ENCODE measurements at regions of chr3 and their contacts with region 1.

Region 1: GRCh38 chr3:126259411-126260391 is 79.3 kb upstream of the ALDH1L1 start:
- DNase-seq: peak; percentile 69 to 82 (median 79)
- H3K4me3 ChIP-seq: no peak overlapping the region
- H3K27ac ChIP-seq: peak overlapping the region in 1 of 2 donors; percentile 43
- H3K4me1 ChIP-seq: peaks cover 2% of the 10 kb centered on the region
- H3K27me3 ChIP-seq: no peaks in the 10 kb centered on the region
- CTCF ChIP-seq: peak; percentile 58 to 89 (median 74)
- EP300 ChIP-seq: no peak
- POLR2A ChIP-seq: no peak

Region 2: DNA sequence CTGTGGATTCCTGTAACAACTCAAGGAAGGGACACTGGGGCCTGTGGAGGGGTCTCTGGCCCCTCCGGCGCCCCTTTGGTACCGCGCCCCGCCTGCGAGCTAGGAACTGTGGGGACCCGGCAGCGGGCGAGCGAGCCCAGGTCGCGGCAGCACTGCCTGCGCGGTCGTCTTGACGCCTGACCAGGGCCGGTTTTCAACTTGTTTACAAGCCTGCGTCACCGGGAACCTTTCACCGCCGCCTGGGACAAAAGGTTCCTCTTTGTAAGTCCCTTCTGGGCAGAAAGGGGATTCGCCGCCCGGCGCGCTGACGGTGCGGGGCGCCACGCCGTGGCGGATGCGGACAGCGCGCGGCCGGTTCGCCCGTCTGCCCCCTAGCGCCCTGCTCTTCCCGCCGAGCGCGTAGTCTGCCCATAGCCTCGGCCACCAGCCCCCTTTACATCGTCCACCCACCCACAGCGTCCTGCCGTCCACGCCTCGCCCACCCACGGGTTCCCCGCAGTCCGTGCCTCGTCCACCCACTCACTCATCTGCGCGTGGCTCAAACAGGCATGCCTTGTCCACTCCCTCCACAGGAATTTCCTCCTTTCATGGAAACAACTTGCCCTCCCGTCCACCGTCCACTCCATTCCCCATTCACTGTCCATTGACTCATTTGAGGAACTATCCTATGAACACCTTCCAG is 129.6 kb after region 1 on chr3:
- intact Hi-C with region 1: loop called in 3 of 4 experiments (anchors 2 to 5 kb)
- DNase-seq: peak; percentile 87 to 96 (median 91)
- H3K4me3 ChIP-seq: peak overlapping the region; percentile 34
- H3K27ac ChIP-seq: peak overlapping the region; percentile 79 to 81
- H3K4me1 ChIP-seq: peaks cover 4% of the 10 kb centered on the region
- H3K27me3 ChIP-seq: no peaks in the 10 kb centered on the region
- CTCF ChIP-seq: peak; percentile 95 to 100 (median 100)
- EP300 ChIP-seq: peak; percentile 87
- POLR2A ChIP-seq: peak; percentile 73

Region 3: DNA sequence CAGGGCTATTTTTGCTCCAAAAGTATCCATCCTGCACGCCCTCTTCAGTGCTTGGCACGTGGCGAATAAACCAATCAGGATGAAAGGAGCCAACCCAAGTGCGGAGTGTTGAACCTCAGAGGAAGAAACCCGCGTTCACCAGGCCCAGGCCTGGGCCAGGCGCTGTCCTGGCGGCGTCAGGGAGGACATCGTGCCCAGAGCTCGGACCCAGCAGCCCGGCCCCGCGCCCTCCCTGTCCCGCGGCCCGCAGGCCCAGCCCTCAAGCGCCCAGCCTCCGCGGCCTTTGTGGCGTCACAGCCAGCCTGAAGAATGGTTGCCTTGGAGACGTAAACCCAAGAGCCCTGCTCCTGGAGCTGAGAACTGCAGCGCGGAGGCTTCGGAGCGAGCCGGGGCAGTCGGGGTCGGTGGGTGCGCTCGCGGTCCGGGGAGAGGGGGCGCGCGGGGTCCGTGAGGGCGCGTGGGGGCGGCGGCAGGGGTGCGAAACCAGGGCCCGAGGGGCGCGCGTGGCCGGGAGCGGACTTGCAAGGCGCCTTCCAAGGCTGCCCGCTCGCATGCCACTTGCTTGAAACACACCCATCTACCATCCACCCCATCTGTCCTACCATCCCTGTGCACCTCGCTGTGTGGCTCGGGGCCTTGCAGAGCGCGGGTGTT is 135.0 kb after region 1 on chr3 and contains the start of gene CFAP100:
- intact Hi-C with region 1: loop called (anchors 2 to 5 kb)
- DNase-seq: peak; percentile 43 to 74 (median 59)
- H3K4me3 ChIP-seq: peak within 1 kb of the TSS; percentile 1
- H3K27ac ChIP-seq: no peak within 1 kb of the TSS
- H3K4me1 ChIP-seq: peaks cover 3% of the 10 kb centered on the region
- H3K27me3 ChIP-seq: no peaks in the 10 kb centered on the region
- CTCF ChIP-seq: no peak
- EP300 ChIP-seq: no peak
- POLR2A ChIP-seq: no peak
- total RNA-seq, gene CFAP100: 1.5 to 21.3 (median 1.7) TPM in 5 of 7 donors, not detected in the others

Region 4: GRCh38 chr3:126671521-126671920 is 411.8 kb after region 1 on chr3:
- intact Hi-C with region 1: no loop called
- DNase-seq: no peak
- H3K4me3 ChIP-seq: no peak overlapping the region
- H3K27ac ChIP-seq: no peak overlapping the region
- H3K4me1 ChIP-seq: no peaks in the 10 kb centered on the region
- H3K27me3 ChIP-seq: no peaks in the 10 kb centered on the region
- CTCF ChIP-seq: no peak
- EP300 ChIP-seq: no peak
- POLR2A ChIP-seq: no peak

Measured in ovary (tissue), 10 donors.